AG04450 (cell line): ENCODE measurements at regions of chr13 and their contacts with region 1.

Region 1: DNA sequence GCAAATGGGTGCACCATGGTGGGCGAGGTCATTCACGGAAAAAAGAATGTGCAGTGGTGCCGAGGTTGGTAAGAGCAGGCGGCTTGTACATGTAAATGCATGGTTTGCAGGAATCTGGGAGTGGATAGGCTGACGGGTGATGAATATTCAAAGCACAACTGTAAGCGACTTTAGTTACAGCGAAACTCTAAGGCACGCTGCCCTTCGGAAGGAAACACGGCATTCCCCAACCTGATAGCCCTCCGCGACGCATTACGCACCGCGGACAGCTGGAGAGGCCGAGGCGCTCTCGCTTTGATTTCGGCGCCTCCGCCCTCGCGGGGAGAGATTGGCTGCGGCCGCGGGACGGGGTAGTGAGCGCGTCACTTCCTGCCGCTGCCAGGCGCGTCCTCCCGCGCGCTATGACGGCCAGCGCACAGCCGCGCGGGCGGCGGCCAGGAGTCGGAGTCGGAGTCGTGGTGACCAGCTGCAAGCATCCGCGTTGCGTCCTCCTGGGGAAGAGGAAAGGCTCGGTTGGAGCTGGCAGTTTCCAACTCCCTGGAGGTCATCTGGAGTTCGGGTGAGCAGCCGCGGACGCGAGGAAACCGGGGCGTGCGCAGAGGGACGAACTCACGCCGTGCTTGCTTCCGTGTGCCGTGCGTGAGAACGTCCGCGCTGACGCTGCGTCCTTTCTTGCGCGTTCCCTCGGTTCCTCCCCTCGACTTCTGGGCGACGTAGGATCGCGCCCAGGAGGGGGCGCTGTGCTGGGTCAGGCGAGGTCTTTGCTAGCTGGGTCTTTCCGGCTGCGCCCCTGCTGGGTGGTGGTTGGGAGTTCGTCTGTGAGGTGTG is at the start of gene NUDT15:
- DNase-seq: peak; percentile 93
- H3K4me3 ChIP-seq: peak within 1 kb of the TSS; percentile 89
- H3K27ac ChIP-seq: peak within 1 kb of the TSS; percentile 98
- H3K27me3 ChIP-seq: no peaks in the 10 kb centered on the region
- CTCF ChIP-seq: peak; percentile 98
- polyA plus RNA-seq, gene NUDT15: 13.9 and 17.1 TPM in 2 replicates

Region 2: GRCh38 chr13:48000778-48001628 is 36.6 kb before region 1 on chr13 and contains the start of gene SUCLA2:
- CTCF ChIA-PET with region 1: interaction called, 14 read pairs
- POLR2A ChIA-PET with region 1: interaction called, 5 read pairs
- DNase-seq: peak; percentile 65
- H3K4me3 ChIP-seq: peak within 1 kb of the TSS; percentile 100
- H3K27ac ChIP-seq: peak within 1 kb of the TSS; percentile 65
- H3K27me3 ChIP-seq: no peaks in the 10 kb centered on the region
- CTCF ChIP-seq: no peak; the same call in 1 of the 2 replicates
- polyA plus RNA-seq, gene SUCLA2: 50.7 and 63.5 TPM in 2 replicates

Region 3: GRCh38 chr13:48009298-48009697 is 28.3 kb before region 1 on chr13:
- CTCF ChIA-PET with region 1: interaction called, 14 read pairs
- POLR2A ChIA-PET with region 1: interaction called, 3 read pairs
- DNase-seq: peak; percentile 13
- H3K4me3 ChIP-seq: no peak overlapping the region
- H3K27ac ChIP-seq: no peak overlapping the region
- H3K27me3 ChIP-seq: peaks cover 2% of the 10 kb centered on the region
- CTCF ChIP-seq: no peak

Region 4: GRCh38 chr13:48094781-48095502 is 57.4 kb after region 1 on chr13 and contains the start of gene MED4:
- CTCF ChIA-PET with region 1: interaction called, 20 read pairs
- POLR2A ChIA-PET with region 1: interaction called, 5 read pairs
- DNase-seq: peak; percentile 85
- H3K4me3 ChIP-seq: peak within 1 kb of the TSS; percentile 88
- H3K27ac ChIP-seq: peak within 1 kb of the TSS; percentile 69
- H3K27me3 ChIP-seq: no peaks in the 10 kb centered on the region
- CTCF ChIP-seq: peak; percentile 100
- polyA plus RNA-seq, gene MED4: 47.2 and 54.1 TPM in 2 replicates

Region 5: DNA sequence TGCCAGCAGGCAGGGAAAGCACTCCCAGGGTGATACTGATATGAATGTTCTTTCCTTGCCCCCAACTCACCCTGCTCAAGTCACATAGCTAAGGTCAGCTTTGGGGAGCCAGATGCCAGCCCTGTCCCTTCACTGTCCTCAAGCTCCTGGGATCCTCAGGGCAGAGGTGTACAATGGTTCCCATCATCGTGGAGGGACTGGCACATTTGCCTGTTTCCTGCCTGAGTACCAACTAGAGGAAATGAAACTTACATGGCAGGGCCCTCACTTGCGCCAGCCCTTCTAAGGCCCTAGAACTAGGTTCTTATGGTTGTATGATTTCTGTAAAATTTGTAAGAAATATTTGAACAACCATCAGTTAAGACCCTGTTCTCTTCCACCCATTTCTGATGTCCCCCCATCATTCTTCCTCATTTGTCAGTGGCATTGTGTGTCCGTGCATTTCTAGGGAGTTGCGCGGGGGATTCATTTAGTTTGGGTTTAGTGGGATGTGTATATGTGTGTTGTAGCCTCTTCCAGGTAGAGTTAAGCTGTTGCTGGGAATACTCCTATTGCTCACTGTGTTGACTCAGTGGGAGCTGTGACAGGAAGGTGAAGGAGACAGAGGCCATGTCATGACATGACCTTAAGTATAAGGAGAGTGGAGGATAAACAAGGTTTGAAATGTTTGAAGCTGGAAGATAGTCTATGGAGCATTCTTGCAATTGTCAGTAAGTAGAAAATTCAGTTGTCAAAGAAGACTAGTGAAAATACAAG is 536.7 kb after region 1 on chr13:
- CTCF ChIA-PET with region 1: no interaction called
- POLR2A ChIA-PET with region 1: no interaction called
- DNase-seq: no peak
- H3K4me3 ChIP-seq: no peak overlapping the region
- H3K27ac ChIP-seq: no peak overlapping the region
- H3K27me3 ChIP-seq: peaks cover 2% of the 10 kb centered on the region
- CTCF ChIP-seq: no peak